Dorsolateral prefrontal cortex (tissue), 120 donors: ENCODE measurements at regions of chr16 and their contacts with region 1.

Region 1: DNA sequence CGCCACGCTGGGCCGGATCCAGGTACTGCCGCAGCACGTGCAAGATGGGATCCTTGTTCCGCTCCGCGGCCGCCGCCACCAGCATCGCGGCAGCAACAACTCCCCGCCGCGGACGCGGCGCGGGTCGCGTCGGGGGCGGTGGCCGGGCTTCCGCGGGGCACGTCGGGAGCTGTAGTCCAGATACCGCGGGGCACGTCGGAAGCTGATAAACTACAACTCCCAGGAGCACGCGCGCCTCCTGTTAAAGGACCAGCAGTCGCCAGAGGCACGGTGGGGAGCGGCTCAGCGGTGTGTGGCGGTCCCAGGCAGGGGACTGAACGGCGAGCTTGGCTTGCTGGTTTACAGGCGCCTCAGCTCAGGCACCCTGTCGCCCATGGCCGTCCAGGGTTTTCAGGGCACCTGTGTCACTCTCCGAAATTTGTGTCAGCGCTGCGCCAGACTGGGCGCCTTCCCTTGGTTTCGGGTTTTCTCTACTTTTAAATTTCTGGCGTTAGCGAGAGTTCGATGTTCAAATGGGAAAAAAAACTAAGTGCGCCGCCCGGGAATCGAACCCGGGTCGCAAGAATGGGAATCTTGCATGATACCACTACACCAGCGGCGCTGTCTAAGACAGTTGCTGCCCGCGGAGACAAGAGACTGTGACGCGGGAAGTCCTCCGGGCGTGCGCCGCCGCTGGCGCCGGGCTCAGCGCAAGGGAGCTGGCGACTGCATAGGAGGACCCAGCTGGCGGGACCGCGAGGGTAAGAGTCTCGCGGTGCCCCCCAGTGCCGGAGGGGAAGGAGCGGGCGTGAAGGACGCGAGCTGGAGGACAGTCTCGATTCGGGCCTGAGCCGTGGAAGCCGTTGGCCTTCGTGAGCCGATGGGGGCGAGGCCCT is at the start of gene METTL26:
- DNase-seq: peak; percentile 96 to 100 (median 97)
- H3K4me3 ChIP-seq: peak within 1 kb of the TSS; percentile 54 to 100 (median 92)
- H3K27ac ChIP-seq: peak within 1 kb of the TSS; percentile 89 to 100 (median 99)
- H3K27me3 ChIP-seq: no peaks in the 10 kb centered on the region
- CTCF ChIP-seq: peak in 30 of 56 donors; percentile 5 to 42 (median 24)
- total RNA-seq, gene METTL26: 51.9 to 123 (median 84.4) TPM

Region 2: GRCh38 chr16:589658-590159 is 46.7 kb before region 1 on chr16 and contains the start of gene RAB40C:
- intact Hi-C with region 1: loop called (anchors 1 to 5 kb)
- DNase-seq: peak; percentile 97 to 100 (median 99)
- H3K4me3 ChIP-seq: peak within 1 kb of the TSS; percentile 73 to 100 (median 93)
- H3K27ac ChIP-seq: peak within 1 kb of the TSS; percentile 84 to 100 (median 99)
- H3K27me3 ChIP-seq: no peaks in the 10 kb centered on the region
- CTCF ChIP-seq: peak in 2 of 56 donors; percentile 4 to 12
- total RNA-seq, gene RAB40C: 34.4 to 107 (median 63.1) TPM